Heart left ventricle (tissue), 16 donors: ENCODE measurements at regions of chr4 and their contacts with region 1.

Region 1: DNA sequence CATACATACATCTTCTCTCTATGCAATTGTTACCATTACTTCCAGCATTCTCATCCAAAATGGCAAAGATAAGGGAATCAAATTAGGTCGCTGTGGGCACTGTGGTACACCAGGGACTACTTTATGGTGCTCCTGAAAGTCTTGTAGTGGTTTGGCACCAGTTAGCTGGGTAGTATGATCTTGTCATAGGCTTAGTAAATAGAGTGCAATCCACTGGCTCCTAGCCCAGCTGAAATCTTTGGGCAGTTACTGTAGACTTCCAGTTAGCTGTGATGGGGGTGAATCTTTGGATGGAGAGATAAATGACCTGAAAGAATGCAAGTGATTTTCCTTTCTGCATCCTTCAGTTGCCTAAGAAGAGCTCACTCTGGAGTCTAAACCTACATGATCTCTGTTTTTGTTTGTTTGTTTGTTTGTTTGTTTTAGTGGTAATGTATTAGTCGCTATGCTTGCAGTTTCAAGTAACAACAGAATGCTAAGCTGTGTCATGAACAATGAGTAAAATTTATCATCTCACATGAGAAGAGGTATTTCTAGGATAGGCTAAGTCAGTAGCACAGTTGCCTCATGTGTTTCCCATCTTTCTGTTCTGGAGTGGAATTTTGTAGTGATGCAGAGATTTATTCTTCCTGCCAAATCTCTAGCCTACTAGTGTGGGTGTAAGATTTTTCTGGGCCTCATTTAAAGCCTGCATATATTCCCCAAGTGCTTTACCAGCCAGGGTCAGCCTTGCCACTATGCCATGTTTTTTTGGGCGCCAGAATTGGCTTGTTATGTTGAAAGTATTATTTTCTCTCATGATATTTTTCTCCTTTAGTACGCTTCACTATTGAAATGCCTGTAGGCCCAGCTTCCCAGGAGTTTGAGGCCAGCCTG is 24.2 kb downstream of the HERC3 start:
- DNase-seq: no peak
- ATAC-seq: peak in 1 of 4 donors; percentile 37
- H3K4me3 ChIP-seq: no peak overlapping the region
- H3K27ac ChIP-seq: peak overlapping the region in 4 of 12 donors; percentile 11 to 43 (median 26)
- H3K4me1 ChIP-seq: peaks cover 3 to 77% (median 42%) of the 10 kb centered on the region in 12 donors
- H3K27me3 ChIP-seq: no peaks in the 10 kb centered on the region
- CTCF ChIP-seq: no peak
- POLR2A ChIP-seq: no peak

Region 2: GRCh38 chr4:88264336-88264735 is 352.2 kb before region 1 on chr4:
- intact Hi-C with region 1: no loop called
- DNase-seq: no peak
- ATAC-seq: no peak
- H3K4me3 ChIP-seq: no peak overlapping the region
- H3K27ac ChIP-seq: no peak overlapping the region
- H3K4me1 ChIP-seq: peaks cover 0 to 7% (median 0%) of the 10 kb centered on the region in 12 donors
- H3K27me3 ChIP-seq: no peaks in the 10 kb centered on the region
- CTCF ChIP-seq: no peak
- POLR2A ChIP-seq: no peak

Region 3: DNA sequence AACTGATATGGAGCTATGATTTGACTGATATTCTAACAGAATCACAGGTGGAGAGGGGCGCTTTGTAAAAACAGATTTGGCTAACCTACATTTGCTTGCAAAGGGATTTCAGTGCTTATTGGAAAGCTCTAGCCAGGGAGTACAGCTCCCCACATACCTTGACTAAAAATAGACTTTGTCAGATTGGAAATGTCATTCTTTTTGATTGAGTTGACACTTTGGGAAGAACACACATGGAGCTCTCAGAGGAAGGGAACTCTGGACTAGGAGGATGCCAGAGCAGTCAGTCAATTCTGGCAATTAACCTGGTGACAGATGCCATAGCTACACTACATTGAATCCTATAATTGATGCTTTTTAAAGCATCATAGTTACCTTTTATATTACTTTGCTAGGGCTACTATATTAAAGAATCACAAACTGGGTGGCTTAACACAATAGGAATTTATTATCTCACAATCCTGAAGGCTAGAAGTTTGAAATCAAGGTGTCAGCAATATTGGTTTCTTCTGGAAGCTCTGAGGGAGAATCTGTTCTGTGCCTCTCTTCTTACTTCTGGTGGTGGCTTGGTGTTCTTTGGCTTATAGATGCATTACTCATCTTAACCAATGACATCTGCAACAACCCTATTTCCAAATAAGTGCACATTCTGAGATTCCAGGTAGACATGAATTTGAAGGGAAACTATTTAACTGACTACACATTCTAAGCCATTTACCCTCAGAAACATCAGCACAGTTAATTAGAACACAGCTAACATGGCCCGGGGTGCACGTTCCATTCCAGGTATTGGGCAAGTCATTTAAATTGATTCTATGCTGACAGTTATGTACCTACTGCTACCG is 32.7 kb before region 1 on chr4:
- intact Hi-C with region 1: loop called in 1 of 10 experiments (anchors 5 kb)
- DNase-seq: no peak
- ATAC-seq: peak; percentile 89 to 96 (median 92)
- H3K4me3 ChIP-seq: no peak overlapping the region
- H3K27ac ChIP-seq: peak overlapping the region in 9 of 12 donors; percentile 4 to 64 (median 40)
- H3K4me1 ChIP-seq: peaks cover 0 to 18% (median 5%) of the 10 kb centered on the region in 12 donors
- H3K27me3 ChIP-seq: no peaks in the 10 kb centered on the region
- CTCF ChIP-seq: no peak
- POLR2A ChIP-seq: no peak